ENCODE measurements at regions of chr12 and their contacts with region 1.

Region 1: GRCh38 chr12:120086801-120087621 is 29.5 kb downstream of the RAB35 start:
- DNase-seq: peak; percentile 100
- H3K4me3 Mint-ChIP-seq: peak overlapping the region; percentile 78
- H3K27ac Mint-ChIP-seq: peak overlapping the region; percentile 88
- H3K4me1 Mint-ChIP-seq: peaks cover 33% of the 10 kb centered on the region
- H3K27me3 Mint-ChIP-seq: peaks cover 2% of the 10 kb centered on the region

Region 2: GRCh38 chr12:119876761-119877638 is 210.0 kb before region 1 on chr12 and contains the start of gene CIT:
- intact Hi-C with region 1: loop called (anchors 1 kb)
- DNase-seq: peak; percentile 97
- H3K4me3 Mint-ChIP-seq: peak within 1 kb of the TSS; percentile 87
- H3K27ac Mint-ChIP-seq: peak within 1 kb of the TSS; percentile 79
- H3K4me1 Mint-ChIP-seq: peaks cover 21% of the 10 kb centered on the region
- H3K27me3 Mint-ChIP-seq: peaks cover 9% of the 10 kb centered on the region
- total RNA-seq, gene CIT: 44.5 and 51.5 TPM in 2 replicates

Region 3: GRCh38 chr12:119936705-119937311 is 150.2 kb before region 1 on chr12:
- intact Hi-C with region 1: loop called (anchors 2 kb)
- DNase-seq: no peak
- H3K4me3 Mint-ChIP-seq: no peak overlapping the region
- H3K27ac Mint-ChIP-seq: no peak overlapping the region
- H3K4me1 Mint-ChIP-seq: no peaks in the 10 kb centered on the region
- H3K27me3 Mint-ChIP-seq: peaks cover 13% of the 10 kb centered on the region

Region 4: DNA sequence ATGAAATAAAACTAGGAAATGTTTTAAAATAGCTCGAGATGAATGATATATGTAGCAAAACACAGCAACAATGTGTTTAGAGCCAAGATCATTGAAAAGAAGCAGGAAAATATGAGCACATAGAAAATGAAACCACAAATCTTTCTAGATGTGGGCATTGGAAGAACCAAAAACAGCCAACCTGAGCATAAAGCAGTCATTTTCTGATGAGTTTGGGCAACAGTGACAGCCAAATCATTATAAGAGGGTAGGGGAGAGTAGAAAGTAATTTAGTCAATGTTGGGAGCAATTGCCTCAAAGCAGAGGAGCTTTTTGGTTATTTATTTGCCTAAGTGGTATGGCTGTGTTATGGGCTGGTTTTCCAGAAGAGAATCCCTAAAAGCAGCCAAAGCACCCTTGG is 106.8 kb before region 1 on chr12:
- intact Hi-C with region 1: loop called (anchors 2 kb)
- DNase-seq: peak; percentile 61
- H3K4me3 Mint-ChIP-seq: peak overlapping the region; percentile 42
- H3K27ac Mint-ChIP-seq: peak overlapping the region; percentile 90
- H3K4me1 Mint-ChIP-seq: peaks cover 12% of the 10 kb centered on the region
- H3K27me3 Mint-ChIP-seq: peaks cover 12% of the 10 kb centered on the region

Region 5: DNA sequence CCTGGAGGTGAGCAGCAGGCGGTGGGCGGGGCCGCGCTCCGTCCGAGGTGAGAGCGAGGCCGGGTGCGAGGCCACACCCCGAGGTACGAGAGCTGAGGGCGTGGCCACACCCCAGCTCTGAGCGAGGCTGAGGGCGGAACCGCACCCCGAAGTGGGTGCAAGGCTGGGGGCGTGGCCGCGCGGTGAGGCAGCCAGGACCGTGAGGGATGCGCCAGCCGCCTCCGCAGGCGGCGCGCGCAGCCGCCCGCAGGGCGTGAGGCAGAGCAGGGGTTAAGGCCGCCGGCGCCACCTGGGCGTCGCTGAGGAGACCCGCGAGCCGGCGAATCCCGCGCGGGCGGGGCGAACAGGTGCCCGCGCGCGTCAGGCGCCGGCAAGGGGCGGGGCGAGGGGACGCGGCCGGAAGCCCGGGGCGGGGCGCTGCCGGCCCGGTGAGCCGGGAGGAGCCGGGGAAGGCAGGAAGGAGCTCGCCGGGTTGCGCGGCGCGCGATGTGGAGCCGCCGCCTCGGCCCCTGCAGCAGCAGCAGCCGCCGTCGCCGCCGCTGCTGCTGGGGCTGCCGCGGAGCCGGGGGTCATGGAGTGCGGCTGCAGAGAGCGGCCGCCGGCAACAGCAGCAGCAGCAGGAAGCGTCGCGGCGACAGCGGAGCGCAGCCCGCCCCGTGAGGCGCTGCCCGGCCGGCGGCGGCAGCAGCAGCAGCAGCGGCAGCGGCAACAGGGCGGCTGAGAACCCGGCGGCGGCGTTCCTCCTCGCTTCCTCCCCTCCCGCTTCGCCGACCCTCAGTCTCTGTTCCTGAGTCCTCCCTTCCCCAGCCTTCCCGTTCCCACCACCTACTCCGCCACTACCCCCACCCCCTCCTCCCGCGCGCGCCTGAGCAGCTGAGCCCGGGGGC is 98.0 kb before region 1 on chr12 and contains the start of gene BICDL1:
- intact Hi-C with region 1: loop called (anchors 1 kb)
- DNase-seq: peak; percentile 99
- H3K4me3 Mint-ChIP-seq: peak within 1 kb of the TSS; percentile 93
- H3K27ac Mint-ChIP-seq: peak within 1 kb of the TSS; percentile 96
- H3K4me1 Mint-ChIP-seq: peaks cover 35% of the 10 kb centered on the region
- H3K27me3 Mint-ChIP-seq: peaks cover 4% of the 10 kb centered on the region
- total RNA-seq, gene BICDL1: 148 and 154 TPM in 2 replicates

Region 6: DNA sequence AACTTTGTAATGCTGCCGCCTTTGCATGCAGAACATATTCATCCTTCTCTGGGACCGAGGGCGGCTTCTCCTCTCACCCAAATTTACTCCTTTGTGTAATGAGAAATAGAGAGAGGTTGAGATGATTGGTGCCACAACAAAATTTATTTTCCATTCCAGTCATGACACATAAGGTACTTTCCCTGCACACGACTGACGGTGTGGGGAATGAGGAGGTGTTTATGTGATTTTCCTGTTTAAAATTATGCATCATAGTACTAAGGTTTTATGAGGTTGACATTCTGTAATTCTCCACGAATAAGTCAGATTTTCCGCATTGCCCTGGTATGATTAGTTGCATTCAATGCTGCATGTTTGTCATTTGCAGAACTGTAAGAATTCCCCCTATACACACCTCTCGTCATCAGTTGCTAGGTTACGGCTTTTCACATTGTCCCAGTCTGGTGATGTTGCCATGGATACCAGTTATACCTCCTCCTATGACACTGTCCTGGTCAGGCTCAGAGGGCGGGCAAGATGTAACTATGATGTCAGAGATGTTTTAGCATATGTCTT is 74.9 kb before region 1 on chr12:
- intact Hi-C with region 1: loop called (anchors 1 kb)
- DNase-seq: peak; percentile 95
- H3K4me3 Mint-ChIP-seq: peak overlapping the region; percentile 75
- H3K27ac Mint-ChIP-seq: peak overlapping the region; percentile 96
- H3K4me1 Mint-ChIP-seq: peaks cover 70% of the 10 kb centered on the region
- H3K27me3 Mint-ChIP-seq: no peaks in the 10 kb centered on the region

Region 7: DNA sequence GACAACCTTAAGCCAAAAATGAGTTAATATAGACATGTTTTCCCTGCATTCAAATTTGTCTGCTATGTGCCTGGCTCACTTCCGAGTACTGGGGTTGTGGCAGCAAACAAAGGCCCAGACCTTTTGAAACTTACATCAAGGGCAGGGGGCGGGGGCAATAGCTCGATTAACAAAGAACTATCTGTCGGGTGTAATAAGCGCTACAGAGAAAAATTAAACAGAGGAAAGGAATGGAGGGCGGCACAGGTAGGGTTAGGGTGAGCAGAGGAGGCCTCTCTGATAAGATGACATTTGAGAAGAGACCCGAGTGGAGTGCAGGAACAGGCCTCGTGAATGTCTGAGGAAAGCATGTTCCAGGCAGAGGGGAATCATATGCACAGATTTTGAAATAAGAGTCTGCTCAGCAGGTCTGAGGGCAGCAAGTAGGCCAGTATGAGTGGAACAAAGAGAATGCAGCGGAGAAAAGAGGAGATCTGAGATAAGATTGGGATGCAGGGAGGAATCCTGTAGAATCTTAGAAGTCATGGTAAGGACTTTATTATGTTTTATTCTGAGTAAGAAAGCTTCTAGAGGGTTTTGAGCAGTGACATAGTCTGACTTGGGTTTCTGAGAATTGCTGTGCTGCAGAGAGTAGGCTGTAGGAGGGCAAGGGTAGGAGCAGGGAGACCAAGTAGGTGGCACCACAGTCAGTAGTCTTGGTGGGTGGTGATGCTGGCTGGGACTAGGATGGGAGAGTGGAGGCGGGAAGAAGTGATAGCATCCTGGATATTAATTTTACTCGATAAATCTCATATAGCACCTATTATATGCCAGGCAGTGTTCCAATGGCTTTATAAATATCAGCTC is 45.4 kb before region 1 on chr12:
- intact Hi-C with region 1: no loop called
- DNase-seq: no peak
- H3K4me3 Mint-ChIP-seq: no peak overlapping the region
- H3K27ac Mint-ChIP-seq: peak overlapping the region; percentile 55
- H3K4me1 Mint-ChIP-seq: peaks cover 23% of the 10 kb centered on the region
- H3K27me3 Mint-ChIP-seq: no peaks in the 10 kb centered on the region

Region 8: GRCh38 chr12:120116792-120117651 is 30.0 kb after region 1 on chr12:
- intact Hi-C with region 1: loop called (anchors 1 kb)
- DNase-seq: peak; percentile 100
- H3K4me3 Mint-ChIP-seq: peak overlapping the region; percentile 90
- H3K27ac Mint-ChIP-seq: peak overlapping the region; percentile 92
- H3K4me1 Mint-ChIP-seq: peaks cover 72% of the 10 kb centered on the region
- H3K27me3 Mint-ChIP-seq: no peaks in the 10 kb centered on the region

Measured in activated CD4-positive, alpha-beta T cell treated with anti-CD3 and anti-CD28 coated beads, Interleukin-2, amount 10 ng/mL, durations not matched to agents 24 days and 14 days (primary cell).